Tibial artery (tissue), 4 donors: ENCODE measurements at regions of chr6 and their contacts with region 1.

Region 1: GRCh38 chr6:83985308-83985713 is 48.3 kb upstream of the MRAP2 start:
- DNase-seq: no peak
- H3K4me3 ChIP-seq: no peak overlapping the region
- H3K27ac ChIP-seq: peak overlapping the region; percentile 66 to 80
- H3K4me1 ChIP-seq: peaks cover 0 to 61% (median 11%) of the 10 kb centered on the region in 4 donors
- H3K27me3 ChIP-seq: no peaks in the 10 kb centered on the region
- CTCF ChIP-seq: no peak

Region 2: DNA sequence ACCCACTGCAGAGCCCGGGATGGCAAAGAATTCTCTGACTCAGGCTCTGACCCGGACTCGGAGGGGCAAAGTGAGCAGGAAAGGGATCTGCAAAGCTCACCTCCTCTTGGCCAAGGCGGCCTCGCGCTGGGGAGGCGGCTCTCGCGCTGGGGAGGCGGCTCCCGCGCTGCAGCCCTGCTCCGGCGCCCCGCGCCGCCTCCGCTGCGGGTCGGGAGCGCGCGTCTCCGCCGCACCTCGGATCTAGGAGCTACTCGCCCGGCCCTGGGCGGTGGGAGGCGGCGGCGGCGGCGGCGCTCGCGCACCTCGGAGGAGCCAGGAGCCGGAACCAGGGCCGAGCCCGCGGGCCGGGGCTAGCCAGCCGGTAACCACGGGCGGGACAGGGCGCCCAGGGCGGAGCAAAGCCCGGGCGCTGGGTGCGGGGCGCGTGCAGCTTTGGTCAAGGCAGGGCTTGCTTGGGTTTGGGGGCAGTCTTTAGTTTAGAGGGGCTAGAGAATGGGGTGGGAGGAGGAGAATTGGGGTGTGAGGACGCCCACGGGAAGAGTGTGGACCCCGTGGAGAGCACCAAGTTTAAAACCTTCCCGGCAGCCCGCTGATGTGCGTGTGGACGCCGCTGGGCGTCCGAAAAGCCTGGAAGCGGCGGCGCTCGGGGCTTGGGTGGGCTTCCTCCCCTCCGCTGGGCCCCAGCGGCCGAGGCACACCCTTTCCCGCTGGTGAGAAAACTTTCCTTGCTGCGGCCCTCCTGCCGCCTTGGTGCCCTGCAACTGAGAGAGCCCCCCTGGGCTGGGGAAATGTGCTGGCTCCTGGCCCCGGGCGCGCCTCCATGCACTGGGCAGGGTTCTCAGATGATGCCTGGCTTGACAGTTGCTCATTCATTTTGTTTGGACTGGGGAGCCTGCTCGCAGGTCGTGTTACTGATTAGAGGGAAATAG is 48.5 kb after region 1 on chr6 and contains the start of gene MRAP2:
- intact Hi-C with region 1: loop called (anchors 10 kb)
- DNase-seq: peak in 1 of 2 donors; percentile 70
- H3K4me3 ChIP-seq: peak within 1 kb of the TSS; percentile 68 to 76
- H3K27ac ChIP-seq: peak within 1 kb of the TSS; percentile 78 to 89
- H3K4me1 ChIP-seq: peaks cover 0 to 69% (median 30%) of the 10 kb centered on the region in 4 donors
- H3K27me3 ChIP-seq: no peaks in the 10 kb centered on the region
- CTCF ChIP-seq: no peak

Region 3: DNA sequence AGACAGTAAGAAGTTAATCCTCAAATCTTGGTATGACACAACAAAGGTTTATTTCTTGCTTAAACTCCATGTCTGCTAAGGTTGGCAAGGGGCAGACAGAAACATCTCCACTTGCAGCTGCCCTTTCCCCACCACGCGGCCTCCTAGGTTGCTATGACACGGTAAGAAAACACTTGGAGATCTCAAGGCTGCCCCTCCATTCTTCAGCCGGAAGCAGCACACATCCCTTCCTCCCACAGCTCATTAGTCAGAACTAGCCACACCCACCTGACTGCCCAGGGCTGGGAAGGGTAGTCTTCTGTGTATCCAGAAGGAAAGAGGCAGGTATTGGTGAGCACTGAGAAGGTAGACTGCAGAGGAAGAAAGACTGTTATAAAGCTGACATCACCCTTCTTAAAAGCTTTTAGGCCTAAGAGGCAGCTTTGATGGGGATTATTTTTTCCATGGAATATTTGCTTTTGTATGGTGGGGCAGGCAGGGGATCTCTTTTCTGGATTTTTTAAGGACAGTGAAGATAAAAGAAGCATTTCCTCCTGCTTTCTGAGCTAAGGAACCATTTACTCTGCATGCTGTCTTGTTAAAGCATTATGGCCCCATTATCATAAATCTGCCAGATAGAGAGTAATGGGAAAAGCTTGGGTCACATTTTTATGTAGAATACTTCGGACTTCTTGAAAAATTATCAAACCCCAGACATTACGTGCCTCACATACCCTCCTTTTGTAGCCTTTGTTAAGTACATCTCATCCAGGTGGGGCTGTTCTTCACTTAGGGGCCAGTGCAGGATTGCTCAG is 89.9 kb after region 1 on chr6:
- intact Hi-C with region 1: no loop called
- DNase-seq: no peak
- H3K4me3 ChIP-seq: no peak overlapping the region
- H3K27ac ChIP-seq: no peak overlapping the region
- H3K4me1 ChIP-seq: peaks cover 0 to 7% (median 0%) of the 10 kb centered on the region in 4 donors
- H3K27me3 ChIP-seq: no peaks in the 10 kb centered on the region
- CTCF ChIP-seq: no peak